Right cardiac atrium (tissue), 5 donors: ENCODE measurements at regions of chr14 and their contacts with region 1.

Region 1: GRCh38 chr14:54805521-54806322 is 96.9 kb downstream of the GCH1 start:
- DNase-seq: peak; percentile 88 to 94 (median 94)
- ATAC-seq: peak; percentile 91
- H3K4me3 ChIP-seq: no peak overlapping the region
- H3K27ac ChIP-seq: no peak overlapping the region
- H3K4me1 ChIP-seq: peaks cover 2% of the 10 kb centered on the region
- H3K27me3 ChIP-seq: no peaks in the 10 kb centered on the region

Region 2: GRCh38 chr14:54893151-54893760 is 87.5 kb after region 1 on chr14:
- intact Hi-C with region 1: loop called in 1 of 4 experiments (anchors 10 kb)
- DNase-seq: no peak
- ATAC-seq: peak in 1 of 2 donors; percentile 65
- H3K4me3 ChIP-seq: no peak overlapping the region
- H3K27ac ChIP-seq: no peak overlapping the region
- H3K4me1 ChIP-seq: no peaks in the 10 kb centered on the region
- H3K27me3 ChIP-seq: no peaks in the 10 kb centered on the region